ENCODE measurements at regions of chr1 and their contacts with region 1.

Region 1: DNA sequence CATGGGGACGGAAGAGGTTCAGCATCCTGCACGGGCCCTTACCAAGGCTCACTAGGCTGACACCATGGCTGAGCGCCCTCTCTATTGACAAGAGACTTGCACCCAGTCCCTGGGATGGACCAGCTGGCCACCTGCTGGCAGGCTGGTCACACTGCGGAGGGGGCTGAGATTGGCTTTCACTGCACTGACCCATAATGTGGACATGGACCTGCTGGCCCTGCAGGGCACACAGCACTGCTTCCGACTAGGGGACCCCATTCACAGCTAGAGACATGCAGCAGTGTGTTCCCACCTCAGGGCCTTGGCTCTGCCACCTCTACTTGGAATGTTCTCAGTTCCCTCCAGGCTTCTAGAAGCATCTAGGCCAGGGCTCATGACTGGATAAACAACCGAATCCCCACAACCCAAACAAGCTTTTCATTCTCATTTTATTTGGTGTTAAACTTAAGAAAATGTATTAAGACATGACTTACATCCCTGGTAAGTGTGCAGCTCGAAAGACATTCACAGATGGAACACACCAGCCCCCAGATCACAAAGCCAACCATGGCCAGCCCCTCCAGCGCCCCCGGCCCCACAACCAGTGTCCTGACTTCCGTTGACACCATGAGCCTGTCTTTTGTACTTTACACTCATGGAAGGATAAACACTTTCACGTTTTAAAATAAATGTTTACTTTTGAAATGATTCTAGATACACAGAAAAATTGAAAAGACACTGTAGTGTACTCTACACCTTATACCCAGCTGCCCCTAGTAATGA is 9.3 kb upstream of the SRARP start:
- DNase-seq: peak; percentile 77
- ATAC-seq: peak; percentile 90

Region 2: GRCh38 chr1:15799004-15799936 is 195.5 kb before region 1 on chr1:
- intact Hi-C with region 1: loop called (anchors 10 kb)
- DNase-seq: peak; percentile 54
- ATAC-seq: peak; percentile 68

Measured in left ventricle myocardium superior (tissue), 1 donor.